ENCODE measurements at regions of chr5 and their contacts with region 1.

Region 1: DNA sequence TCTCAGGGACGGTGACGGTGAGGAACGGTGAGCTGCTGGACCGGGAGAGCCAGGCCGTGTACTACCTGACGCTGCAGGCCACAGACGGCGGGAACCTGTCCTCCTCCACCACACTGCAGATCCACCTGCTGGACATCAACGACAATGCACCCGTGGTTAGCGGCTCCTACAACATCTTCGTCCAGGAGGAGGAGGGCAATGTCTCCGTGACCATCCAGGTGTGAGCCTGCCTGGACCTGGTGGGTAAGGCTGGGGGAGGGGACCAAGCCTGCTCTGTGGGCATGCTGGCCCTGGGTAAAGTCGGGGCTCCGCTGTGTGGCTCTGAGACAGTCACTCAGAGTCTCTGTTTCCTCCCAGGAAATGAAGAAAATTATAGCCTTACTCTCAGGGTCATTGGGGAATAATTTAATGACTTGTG is 29.3 kb downstream of the CDHR2 start:
- DNase-seq: peak; percentile 68
- CTCF ChIP-seq: peak; percentile 41

Region 2: GRCh38 chr5:175729829-175730277 is 848.5 kb before region 1 on chr5:
- in situ Hi-C with region 1: loop called (anchors 25 kb)
- DNase-seq: peak; percentile 88
- CTCF ChIP-seq: peak; percentile 99

Region 3: GRCh38 chr5:176481711-176482110 is 96.7 kb before region 1 on chr5:
- in situ Hi-C with region 1: no loop called
- DNase-seq: no peak
- CTCF ChIP-seq: no peak

Region 4: DNA sequence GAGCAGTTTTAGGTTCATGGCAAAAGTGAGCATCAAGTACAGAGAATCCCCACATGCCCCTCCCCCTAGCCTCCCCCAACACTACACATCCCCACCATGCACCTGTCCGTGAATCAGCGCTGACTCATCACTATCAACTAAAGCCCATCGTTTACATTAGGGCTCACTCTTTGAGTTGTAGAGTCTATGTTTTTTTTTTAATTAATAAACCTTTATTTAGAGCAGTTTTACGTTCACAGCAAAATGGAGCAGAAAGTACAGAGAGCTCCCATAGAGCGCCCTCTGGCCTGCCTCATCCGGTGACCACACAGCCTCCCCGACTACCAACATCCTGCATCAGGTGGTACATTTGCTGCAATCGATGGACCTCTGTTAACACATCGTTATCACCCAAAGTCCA is 184.1 kb after region 1 on chr5:
- in situ Hi-C with region 1: no loop called
- DNase-seq: no peak
- CTCF ChIP-seq: no peak

Measured in GM13977 (cell line).